Psoas muscle (tissue), 8 donors: ENCODE measurements at regions of chr19 and their contacts with region 1.

Region 1: DNA sequence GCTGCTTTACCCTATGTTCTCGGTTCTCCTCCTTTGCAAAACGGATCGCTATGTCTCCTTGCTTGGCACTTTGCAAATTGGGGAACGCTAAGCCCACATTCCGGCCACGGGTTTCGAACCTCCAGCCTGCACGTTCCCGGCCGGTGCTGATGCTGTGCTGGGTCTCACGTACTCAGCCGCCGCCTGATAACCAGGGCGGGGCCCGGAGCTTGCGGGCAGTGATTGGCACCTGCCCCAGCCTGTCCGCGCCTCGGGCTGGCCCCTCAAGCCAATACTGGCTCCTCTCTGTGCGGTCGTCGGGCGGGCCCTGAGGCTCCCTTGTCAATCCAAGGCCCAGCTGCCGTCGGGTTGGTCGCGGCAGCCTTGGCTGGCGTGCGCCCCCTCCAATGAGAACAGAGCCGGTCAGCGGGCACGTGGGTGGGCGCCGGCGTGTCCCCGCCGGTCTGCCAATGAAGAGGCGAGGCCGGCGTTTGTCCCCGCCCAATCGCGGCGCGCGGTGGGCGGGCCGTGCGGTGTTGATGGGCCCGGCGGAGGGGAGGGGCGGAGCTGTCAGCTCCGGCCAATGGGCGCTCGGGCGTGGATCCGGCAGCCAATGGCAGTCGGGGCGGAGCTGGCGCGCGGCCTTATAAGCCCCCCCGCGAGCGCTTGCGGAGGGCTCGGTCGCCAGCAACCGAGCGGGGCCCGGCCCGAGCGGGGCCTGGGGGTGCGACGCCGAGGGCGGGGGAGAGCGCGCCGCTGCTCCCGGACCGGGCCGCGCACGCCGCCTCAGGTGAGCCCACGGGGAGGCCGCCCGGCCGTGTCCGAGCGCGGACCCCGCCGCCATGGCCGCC is at the start of gene KDM4B:
- DNase-seq: peak; percentile 100
- ATAC-seq: peak; percentile 92 to 96 (median 95)
- H3K4me3 ChIP-seq: peak within 1 kb of the TSS; percentile 73
- H3K27ac ChIP-seq: peak within 1 kb of the TSS; percentile 71
- H3K4me1 ChIP-seq: peaks cover 36% of the 10 kb centered on the region
- H3K27me3 ChIP-seq: no peaks in the 10 kb centered on the region
- CTCF ChIP-seq: no peak
- total RNA-seq, gene KDM4B: 22.9 to 45.9 (median 37.8) TPM

Region 2: DNA sequence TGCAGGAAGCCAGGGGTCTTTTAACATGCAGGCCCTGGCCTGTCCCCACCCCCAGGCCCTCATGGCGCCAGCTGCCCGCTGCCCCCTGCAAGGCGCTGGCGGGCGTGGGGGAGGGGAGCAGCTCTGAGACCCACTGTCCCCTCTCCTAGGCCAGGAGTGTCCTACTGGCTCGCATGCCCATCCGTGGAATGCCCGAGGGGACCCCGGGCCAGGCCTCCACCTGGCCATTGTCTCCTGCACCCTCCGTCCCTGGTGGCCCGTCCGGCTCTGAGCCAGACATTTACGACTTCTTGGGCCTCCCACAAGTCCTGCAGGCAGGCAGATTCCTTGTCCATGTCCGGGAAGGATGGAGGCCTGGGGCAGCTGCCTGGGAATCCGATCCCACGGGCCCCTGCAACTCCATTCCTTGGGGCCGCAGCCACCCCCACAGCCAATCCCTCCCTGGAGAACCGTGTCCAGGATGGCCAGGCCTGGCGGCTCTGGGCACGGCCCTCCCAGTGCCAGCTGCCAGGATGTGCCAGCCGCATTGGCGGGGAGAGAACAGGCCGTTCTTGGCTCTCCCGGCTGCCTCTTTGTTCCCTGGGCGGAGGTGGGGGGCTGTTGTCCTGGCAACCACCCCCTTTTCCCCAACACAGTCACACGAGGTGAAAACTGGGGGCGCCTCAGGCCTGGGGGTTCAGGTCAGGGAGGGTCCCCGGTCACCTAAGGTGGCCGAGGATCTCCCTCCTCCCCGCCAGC is 90.8 kb before region 1 on chr19:
- intact Hi-C with region 1: loop called in 1 of 2 experiments (anchors 5 kb)
- DNase-seq: peak; percentile 84 to 94
- ATAC-seq: peak; percentile 92 to 94 (median 94)
- H3K4me3 ChIP-seq: peak overlapping the region; percentile 21
- H3K27ac ChIP-seq: peak overlapping the region; percentile 91
- H3K4me1 ChIP-seq: peaks cover 16% of the 10 kb centered on the region
- H3K27me3 ChIP-seq: no peaks in the 10 kb centered on the region
- CTCF ChIP-seq: no peak

Region 3: DNA sequence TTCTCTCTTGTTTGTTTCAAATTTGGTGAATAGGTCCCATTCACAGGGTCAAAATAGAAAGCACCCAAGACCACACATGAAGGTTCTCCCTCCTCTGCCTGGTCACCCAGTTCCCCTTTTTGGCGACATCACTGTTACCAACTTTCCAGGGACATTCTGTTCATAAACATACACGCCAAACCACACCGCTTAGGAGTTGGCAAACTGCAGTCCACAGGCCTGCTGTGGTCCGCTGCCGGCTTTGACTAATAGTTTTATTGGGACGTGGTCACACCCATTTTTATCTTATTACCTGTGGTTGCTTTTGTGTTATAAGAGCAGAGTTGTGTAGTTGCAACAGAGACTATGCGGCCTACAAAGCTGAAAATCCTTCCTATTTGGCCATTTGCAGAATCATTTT is 35.1 kb before region 1 on chr19:
- intact Hi-C with region 1: no loop called
- DNase-seq: no peak
- ATAC-seq: peak in 3 of 4 donors; percentile 73 to 83 (median 82)
- H3K4me3 ChIP-seq: no peak overlapping the region
- H3K27ac ChIP-seq: no peak overlapping the region
- H3K4me1 ChIP-seq: no peaks in the 10 kb centered on the region
- H3K27me3 ChIP-seq: no peaks in the 10 kb centered on the region
- CTCF ChIP-seq: no peak

Region 4: DNA sequence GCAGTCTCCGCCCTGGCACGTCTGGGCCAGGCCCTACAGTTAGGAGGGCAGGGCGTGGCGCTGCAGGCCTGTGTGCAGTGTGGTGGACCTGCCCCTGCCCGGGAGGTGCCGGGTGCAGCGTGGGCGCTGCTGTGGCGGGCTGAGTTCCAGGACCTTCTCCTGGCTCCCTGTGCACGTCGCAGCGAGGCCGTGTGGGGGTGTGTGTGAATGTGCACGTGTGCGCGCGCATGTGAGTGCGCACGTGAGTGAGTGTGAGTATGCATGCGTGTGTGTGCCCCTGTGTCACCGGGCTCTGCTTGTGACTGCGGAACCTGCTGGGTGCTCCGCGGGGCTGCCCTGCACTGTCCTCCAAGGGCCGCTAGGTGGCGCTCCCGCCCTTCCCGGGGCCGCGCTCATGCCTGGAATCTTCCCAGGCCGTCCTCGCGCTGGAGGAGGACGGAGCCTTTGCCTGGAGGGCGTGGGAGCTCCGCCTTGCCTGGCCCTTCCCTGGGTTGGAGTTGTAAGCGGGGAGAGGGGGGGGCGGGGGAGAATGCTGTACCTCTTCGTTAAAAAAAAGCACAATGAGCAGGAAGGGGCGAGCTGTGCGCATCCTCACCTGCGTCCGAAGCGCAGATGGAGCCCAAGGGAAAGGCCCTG is 79.5 kb after region 1 on chr19:
- intact Hi-C with region 1: no loop called
- DNase-seq: peak; percentile 81 to 89
- ATAC-seq: peak; percentile 82 to 93 (median 84)
- H3K4me3 ChIP-seq: peak overlapping the region; percentile 18
- H3K27ac ChIP-seq: no peak overlapping the region
- H3K4me1 ChIP-seq: peaks cover 39% of the 10 kb centered on the region
- H3K27me3 ChIP-seq: no peaks in the 10 kb centered on the region
- CTCF ChIP-seq: peak; percentile 99